ENCODE measurements at regions of chr10 and their contacts with region 1.

Region 1: DNA sequence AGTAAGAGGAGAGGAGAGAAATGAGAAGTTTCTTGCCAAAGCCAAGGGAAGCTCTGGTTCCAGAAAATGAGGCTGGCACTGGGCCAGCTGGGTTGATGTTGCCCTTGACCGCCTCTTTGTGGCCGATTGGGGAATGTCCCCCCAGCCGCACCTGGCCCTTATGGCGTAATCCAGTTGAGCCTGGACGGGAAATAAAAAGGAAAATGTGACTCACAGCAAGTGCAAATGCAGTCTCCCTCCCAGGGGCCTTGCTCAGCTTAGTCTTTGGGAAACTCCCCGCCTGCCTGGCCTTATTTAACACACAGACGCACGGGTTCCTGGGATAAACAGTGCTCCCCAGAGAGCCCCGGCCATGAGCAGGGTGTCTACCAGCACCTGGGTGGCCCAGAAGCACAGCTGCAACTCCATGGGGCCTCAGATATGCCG is 174.8 kb downstream of the KIAA1217 start:
- DNase-seq: peak; percentile 85
- ATAC-seq: peak; percentile 92

Region 2: DNA sequence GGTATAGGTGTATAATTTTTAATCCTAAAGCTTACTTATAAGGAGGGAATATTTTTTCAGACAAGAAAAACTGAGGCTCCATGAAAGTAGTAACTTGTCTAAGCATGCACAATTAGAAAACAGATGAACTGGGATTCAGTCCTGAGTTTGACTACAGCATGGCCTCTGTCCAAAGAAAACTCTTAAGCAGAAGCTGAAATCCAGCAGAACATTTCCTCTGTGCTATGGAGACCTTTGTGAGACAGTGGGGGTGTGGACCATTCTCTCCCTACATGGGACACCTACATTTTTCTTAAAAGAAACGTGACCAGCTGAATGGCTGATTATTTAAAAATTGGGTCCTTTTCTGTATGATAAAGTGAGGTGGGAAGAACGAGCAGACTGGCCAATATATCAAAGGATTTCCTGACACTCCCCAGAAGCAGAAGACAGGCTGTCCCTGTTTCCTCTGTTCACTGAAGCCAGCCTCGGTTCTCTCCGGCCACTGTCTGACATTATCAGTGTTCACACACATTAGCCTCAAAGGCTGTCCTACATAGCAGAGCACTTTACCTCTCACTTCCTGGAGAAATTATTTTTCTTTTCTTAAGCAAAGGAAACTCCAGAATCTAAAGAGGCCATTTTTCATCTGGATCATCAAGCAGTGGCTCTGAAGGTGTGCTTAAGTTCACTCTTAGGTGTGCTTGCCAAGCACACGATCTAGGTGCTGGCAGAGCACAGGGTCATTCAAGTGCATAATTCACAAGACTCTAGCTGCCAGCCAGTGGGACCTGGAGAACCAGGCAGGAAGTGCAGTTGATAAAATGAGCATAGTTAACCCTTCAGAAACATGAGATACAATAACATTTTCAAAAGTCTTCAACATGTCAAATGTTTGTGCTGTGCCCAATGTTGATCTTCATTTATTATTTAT is 215.2 kb before region 1 on chr10:
- intact Hi-C with region 1: no loop called
- DNase-seq: no peak
- ATAC-seq: peak; percentile 87

Region 3: DNA sequence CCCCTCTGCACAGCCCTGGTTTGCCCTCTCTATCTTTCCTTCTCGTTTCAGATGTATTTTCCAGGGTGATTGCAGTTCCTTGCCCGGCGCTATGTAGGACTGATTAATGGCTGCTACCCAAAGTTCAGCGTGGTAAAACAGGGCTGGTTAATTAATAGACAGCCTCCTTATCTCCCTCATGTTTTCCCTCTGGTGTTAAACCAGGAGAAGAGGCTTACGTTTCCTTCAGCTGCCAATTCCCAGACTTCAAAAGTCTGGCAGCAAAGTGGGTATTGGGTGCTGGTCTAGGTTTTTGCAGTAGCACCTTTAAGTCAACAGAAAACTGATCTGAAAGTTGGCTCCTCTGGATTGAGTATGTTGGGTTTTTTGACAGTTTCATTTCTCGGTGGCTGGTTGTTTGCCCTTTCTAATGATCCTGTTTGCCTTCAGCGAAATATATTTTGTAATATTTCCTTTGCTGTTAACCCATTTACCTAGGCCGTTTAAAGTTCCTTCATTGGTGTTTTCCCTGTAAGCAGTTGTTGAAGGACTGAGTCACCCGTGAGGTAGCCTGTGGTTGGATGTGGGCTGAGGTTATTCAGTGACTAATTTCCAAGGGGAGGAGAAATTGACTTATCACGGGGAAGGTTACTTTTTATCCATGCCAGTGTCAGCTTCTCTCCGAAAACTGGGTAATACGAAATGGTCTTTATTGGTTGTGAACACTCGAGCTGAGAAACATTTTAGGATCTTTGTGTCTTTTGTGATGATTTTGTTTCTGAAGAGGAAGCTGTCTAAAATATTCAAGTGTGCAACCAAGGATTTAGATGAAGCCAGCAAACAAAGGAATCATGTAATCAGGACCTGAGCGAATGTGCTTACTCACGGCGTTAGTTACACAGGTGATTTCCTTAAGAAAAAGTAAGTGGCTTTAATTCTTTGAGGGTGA is 82.5 kb after region 1 on chr10:
- intact Hi-C with region 1: loop called (anchors 10 kb)
- DNase-seq: no peak
- ATAC-seq: peak; percentile 28

Measured in Right ventricle myocardium superior (tissue), 1 donor.